Dendritic cell treated with granulocyte-macrophage colony-stimulating factor and Interleukin-4, amounts not matched to agents 40 ng/mL and 50 ng/mL, for 4 days (primary cell): ENCODE measurements at regions of chr10 and their contacts with region 1.

Region 1: DNA sequence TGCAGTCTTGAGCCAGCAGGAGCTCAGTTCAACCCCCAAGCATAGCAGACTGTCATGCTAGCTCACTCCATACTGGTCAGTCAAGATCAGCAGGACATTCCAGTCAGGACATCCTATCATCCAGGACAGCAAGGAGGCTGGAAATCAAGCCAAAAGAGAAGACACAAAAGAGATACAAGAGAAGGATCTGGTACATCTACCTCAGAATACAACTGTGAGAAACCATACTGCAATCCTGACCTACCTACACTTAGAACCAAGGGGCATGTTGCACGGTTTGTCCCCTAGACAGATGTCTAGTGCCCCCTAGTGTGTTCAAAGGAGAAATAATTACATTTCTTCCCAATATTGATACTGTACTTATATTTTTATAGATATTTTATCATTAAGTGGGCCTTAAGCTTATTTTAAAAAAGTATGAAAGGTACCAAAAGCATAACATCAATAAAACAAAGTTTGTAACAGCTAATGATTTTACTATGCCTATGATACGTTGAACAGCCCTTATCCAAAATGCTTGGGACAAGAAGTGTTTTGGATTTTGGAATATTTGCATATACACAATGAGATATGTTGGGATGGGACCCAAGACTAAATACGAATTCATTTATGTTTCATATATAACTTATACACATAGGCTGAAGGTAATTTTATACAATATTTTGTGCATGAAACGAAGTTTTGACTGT is 26.7 kb downstream of the ERCC6 start:
- H3K4me3 Mint-ChIP-seq: no peak overlapping the region
- H3K27ac Mint-ChIP-seq: no peak overlapping the region
- H3K4me1 Mint-ChIP-seq: peaks cover 24% of the 10 kb centered on the region
- H3K27me3 Mint-ChIP-seq: no peaks in the 10 kb centered on the region

Region 2: GRCh38 chr10:48872234-48872633 is 640.0 kb before region 1 on chr10:
- intact Hi-C with region 1: no loop called
- H3K4me3 Mint-ChIP-seq: no peak overlapping the region
- H3K27ac Mint-ChIP-seq: no peak overlapping the region
- H3K4me1 Mint-ChIP-seq: no peaks in the 10 kb centered on the region
- H3K27me3 Mint-ChIP-seq: no peaks in the 10 kb centered on the region

Region 3: GRCh38 chr10:48981310-48981907 is 530.9 kb before region 1 on chr10:
- intact Hi-C with region 1: loop called (anchors 5 kb)
- H3K4me3 Mint-ChIP-seq: no peak overlapping the region
- H3K27ac Mint-ChIP-seq: no peak overlapping the region
- H3K4me1 Mint-ChIP-seq: no peaks in the 10 kb centered on the region
- H3K27me3 Mint-ChIP-seq: no peaks in the 10 kb centered on the region

Region 4: GRCh38 chr10:49407552-49408137 is 104.6 kb before region 1 on chr10:
- intact Hi-C with region 1: loop called (anchors 1 kb)
- H3K4me3 Mint-ChIP-seq: no peak overlapping the region
- H3K27ac Mint-ChIP-seq: no peak overlapping the region
- H3K4me1 Mint-ChIP-seq: peaks cover 15% of the 10 kb centered on the region
- H3K27me3 Mint-ChIP-seq: peaks cover 71% of the 10 kb centered on the region